ENCODE measurements at regions of chr14 and their contacts with region 1.

Region 1: GRCh38 chr14:56474419-56475022 is 105.1 kb upstream of the TMEM260 start:
- DNase-seq: no peak
- ATAC-seq: peak; percentile 52
- H3K4me3 Mint-ChIP-seq: no peak overlapping the region
- H3K27ac Mint-ChIP-seq: no peak overlapping the region
- H3K4me1 Mint-ChIP-seq: no peaks in the 10 kb centered on the region
- H3K27me3 Mint-ChIP-seq: no peaks in the 10 kb centered on the region
- CTCF ChIP-seq: peak; percentile 47

Region 2: GRCh38 chr14:55446218-55446654 is 1028.3 kb before region 1 on chr14:
- CTCF ChIA-PET with region 1: interaction called, 10 read pairs
- POLR2A ChIA-PET with region 1: no interaction called
- DNase-seq: peak; percentile 71
- ATAC-seq: peak; percentile 90
- H3K4me3 Mint-ChIP-seq: no peak overlapping the region
- H3K27ac Mint-ChIP-seq: no peak overlapping the region
- H3K4me1 Mint-ChIP-seq: peaks cover 8% of the 10 kb centered on the region
- H3K27me3 Mint-ChIP-seq: no peaks in the 10 kb centered on the region
- CTCF ChIP-seq: peak; percentile 71

Region 3: GRCh38 chr14:56339855-56340701 is 134.4 kb before region 1 on chr14:
- CTCF ChIA-PET with region 1: interaction called, 10 read pairs
- POLR2A ChIA-PET with region 1: no interaction called
- DNase-seq: peak; percentile 66
- ATAC-seq: peak; percentile 89
- H3K4me3 Mint-ChIP-seq: no peak overlapping the region
- H3K27ac Mint-ChIP-seq: no peak overlapping the region
- H3K4me1 Mint-ChIP-seq: no peaks in the 10 kb centered on the region
- H3K27me3 Mint-ChIP-seq: no peaks in the 10 kb centered on the region
- CTCF ChIP-seq: peak; percentile 27; the same call in 1 of the 2 replicates

Region 4: DNA sequence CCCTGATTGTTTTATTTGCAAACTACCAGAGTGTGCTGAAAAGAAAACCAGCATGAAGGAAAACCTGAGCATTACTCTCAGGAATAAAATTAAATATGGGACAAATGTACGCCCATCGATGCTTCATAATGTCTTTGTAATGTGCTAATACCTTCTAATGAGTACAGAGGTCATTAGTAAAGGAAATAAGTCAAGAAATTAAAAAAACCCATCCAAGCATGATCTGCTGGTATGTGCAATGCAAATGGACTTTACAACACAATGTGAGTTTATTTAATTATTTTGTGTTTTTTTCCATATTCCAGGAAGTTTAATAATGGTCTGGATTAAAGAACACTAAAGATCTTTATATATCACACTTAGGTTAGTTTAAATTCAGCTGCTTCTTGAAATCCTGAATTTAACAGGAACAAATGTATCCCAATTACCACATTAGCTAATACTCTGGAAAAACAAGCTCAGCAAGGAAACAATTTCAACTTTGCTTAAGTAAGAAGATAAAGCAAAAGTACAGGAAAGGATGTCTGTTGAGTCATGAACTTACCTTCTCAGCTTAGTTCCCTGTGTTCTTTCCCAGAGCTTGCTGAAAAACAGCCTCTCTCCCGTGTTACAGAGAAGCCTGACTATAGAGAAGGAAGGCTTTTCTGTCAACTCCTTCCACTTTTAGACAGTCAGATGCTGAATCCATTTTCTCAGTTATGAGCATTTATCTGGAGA is 74.3 kb before region 1 on chr14:
- CTCF ChIA-PET with region 1: no interaction called
- POLR2A ChIA-PET with region 1: no interaction called
- DNase-seq: no peak
- ATAC-seq: no peak
- H3K4me3 Mint-ChIP-seq: no peak overlapping the region
- H3K27ac Mint-ChIP-seq: no peak overlapping the region
- H3K4me1 Mint-ChIP-seq: no peaks in the 10 kb centered on the region
- H3K27me3 Mint-ChIP-seq: no peaks in the 10 kb centered on the region
- CTCF ChIP-seq: no peak

Region 5: DNA sequence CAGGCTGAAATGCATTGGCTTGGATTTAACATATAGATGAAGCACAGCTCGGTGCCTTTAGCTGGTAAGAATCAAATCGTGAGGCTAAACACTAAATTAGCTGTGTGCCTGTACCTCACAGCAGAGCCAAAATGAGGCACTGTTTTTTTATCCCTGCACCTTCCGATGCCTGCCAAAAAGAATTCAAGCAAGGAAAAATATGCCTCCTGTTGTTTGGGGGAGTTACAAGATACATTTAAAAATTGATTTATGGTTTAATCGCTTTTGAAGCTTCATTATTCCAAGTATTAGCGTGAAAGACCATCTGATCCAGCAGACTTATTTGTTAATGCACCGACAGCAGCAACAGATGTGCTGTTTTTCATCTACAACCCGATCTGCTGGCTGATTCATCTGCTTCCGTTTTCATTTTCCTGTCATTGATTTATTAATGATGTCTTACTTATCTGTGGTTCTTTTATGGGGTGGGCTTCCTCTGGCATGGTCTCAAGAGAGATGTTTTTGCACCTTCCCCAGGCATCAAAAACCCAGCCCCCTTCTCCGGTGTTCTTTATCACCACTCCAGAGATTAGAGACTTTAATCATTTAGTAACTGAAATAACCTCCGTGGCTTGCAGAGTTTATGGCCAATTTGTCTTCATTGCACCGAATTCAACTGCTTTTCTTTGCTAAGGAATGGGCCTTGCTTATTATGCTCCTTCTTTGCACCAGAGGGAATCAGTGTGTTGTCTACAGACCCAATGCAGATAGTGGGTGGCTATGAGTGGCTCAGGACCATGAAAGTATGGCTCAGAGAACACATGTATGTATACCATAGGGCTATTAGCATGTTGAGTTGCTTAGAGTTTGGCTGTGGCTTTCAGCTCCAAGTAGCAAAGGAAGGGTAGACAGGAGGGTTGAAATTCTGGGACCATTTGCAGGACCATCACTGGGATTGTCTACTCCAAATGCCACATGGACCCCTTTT is 61.8 kb before region 1 on chr14:
- CTCF ChIA-PET with region 1: no interaction called
- POLR2A ChIA-PET with region 1: no interaction called
- DNase-seq: no peak
- ATAC-seq: no peak
- H3K4me3 Mint-ChIP-seq: no peak overlapping the region
- H3K27ac Mint-ChIP-seq: no peak overlapping the region
- H3K4me1 Mint-ChIP-seq: no peaks in the 10 kb centered on the region
- H3K27me3 Mint-ChIP-seq: no peaks in the 10 kb centered on the region
- CTCF ChIP-seq: no peak

Region 6: GRCh38 chr14:56461276-56462275 is 12.9 kb before region 1 on chr14:
- CTCF ChIA-PET with region 1: interaction called, 17 read pairs
- POLR2A ChIA-PET with region 1: no interaction called
- DNase-seq: no peak
- ATAC-seq: no peak
- H3K4me3 Mint-ChIP-seq: no peak overlapping the region
- H3K27ac Mint-ChIP-seq: no peak overlapping the region
- H3K4me1 Mint-ChIP-seq: no peaks in the 10 kb centered on the region
- H3K27me3 Mint-ChIP-seq: peaks cover 3% of the 10 kb centered on the region; the same call in 1 of the 2 replicates
- CTCF ChIP-seq: no peak

Region 7: GRCh38 chr14:56534656-56535055 is 60.1 kb after region 1 on chr14:
- CTCF ChIA-PET with region 1: no interaction called
- POLR2A ChIA-PET with region 1: no interaction called
- DNase-seq: no peak
- ATAC-seq: no peak
- H3K4me3 Mint-ChIP-seq: no peak overlapping the region
- H3K27ac Mint-ChIP-seq: no peak overlapping the region
- H3K4me1 Mint-ChIP-seq: peaks cover 5% of the 10 kb centered on the region
- H3K27me3 Mint-ChIP-seq: no peaks in the 10 kb centered on the region
- CTCF ChIP-seq: no peak